Transverse colon (tissue), 4 donors: ENCODE measurements at regions of chr7 and their contacts with region 1.

Region 1: GRCh38 chr7:109611656-109612055 is 1042.0 kb downstream of the DNAJB9 start:
- DNase-seq: no peak
- H3K4me3 ChIP-seq: no peak overlapping the region
- H3K27ac ChIP-seq: no peak overlapping the region
- H3K4me1 ChIP-seq: no peaks in the 10 kb centered on the region
- H3K27me3 ChIP-seq: no peaks in the 10 kb centered on the region
- CTCF ChIP-seq: no peak
- EP300 ChIP-seq: no peak
- POLR2A ChIP-seq: no peak

Region 2: DNA sequence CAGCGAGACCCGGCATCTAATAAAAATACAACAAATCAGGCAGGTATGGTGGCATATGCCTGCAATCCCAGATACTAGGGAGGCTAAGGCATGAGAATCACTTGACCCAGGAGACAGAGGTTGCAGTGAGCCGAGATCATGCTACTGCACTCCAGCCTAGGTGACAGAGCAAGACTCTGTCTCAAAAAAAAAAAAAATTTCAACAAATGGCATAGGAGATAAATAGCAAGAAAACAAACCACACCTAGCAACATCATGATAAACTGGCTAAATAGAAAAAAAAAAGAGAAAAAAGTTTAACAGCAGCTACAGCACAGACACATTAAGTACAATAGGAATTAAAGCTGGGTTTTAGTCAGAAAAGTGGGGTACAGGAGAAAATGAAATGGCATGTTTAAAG is 444.7 kb after region 1 on chr7:
- in situ Hi-C with region 1: no loop called
- intact Hi-C with region 1: loop called (anchors 5 kb)
- DNase-seq: no peak
- H3K4me3 ChIP-seq: no peak overlapping the region
- H3K27ac ChIP-seq: no peak overlapping the region
- H3K4me1 ChIP-seq: no peaks in the 10 kb centered on the region
- H3K27me3 ChIP-seq: no peaks in the 10 kb centered on the region
- CTCF ChIP-seq: no peak
- EP300 ChIP-seq: no peak
- POLR2A ChIP-seq: no peak